ENCODE measurements at regions of chr1 and their contacts with region 1.

Region 1: DNA sequence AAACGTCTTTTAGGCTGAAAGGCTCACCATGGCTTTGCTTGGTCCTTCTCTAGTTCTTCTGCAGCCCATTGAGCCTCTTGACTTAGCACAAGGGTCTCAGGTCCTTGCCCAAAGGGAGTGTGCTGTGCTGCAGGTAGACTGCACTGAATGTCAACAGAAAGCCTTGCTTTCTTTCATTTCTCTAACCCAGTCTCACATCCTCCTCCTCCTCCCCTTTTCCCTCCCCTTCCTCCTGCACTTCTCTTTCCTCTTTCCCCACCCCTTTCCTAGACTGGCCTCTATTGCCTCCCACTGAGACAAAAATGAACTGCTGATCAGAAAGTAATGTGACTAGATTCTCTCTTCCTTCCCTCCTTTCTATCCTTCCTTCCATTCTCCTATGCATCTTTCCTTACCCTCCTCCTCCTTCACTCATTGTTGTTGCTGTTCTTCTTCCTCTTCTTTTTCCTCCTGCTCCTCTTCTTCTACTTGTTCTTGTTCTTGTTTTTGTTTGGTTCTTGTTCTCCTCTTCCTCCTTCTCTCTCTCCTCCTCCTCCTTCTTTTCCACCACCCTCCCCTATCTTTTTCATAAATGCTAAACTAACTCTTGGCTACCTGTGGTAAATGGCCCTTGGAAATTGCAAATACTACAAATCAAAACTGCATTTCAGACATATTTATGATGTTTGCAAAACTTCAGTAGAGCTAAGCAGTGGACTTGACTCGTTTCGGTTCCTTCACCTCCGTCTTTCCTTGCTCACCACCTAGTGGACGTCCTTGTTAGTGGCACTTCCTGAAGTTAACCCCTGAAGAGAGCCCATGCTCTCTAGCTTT is at the start of gene SELL:
- H3K4me3 Mint-ChIP-seq: peak within 1 kb of the TSS; percentile 61
- H3K27ac Mint-ChIP-seq: peak within 1 kb of the TSS; percentile 61
- H3K4me1 Mint-ChIP-seq: peaks cover 32% of the 10 kb centered on the region
- H3K27me3 Mint-ChIP-seq: peaks cover 1% of the 10 kb centered on the region

Region 2: DNA sequence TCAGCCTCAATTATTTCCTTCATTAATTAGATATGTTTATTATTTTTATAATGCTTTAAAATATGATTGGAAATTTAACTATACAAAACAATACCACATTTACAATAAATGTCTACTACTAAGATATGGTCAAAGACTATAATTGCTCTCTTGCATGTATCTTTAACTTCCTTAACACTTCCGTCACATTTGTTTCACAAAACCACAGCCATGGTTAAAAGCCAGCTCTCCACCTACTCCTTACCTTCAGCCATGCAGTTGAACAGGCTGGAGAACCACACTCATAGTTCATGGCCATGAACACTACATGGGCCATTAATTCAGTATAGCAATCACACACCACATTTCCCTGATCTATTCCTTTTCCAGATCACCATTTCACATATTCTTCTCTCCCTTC is 416.2 kb before region 1 on chr1:
- intact Hi-C with region 1: no loop called
- H3K4me3 Mint-ChIP-seq: no peak overlapping the region
- H3K27ac Mint-ChIP-seq: no peak overlapping the region
- H3K4me1 Mint-ChIP-seq: peaks cover 10% of the 10 kb centered on the region
- H3K27me3 Mint-ChIP-seq: no peaks in the 10 kb centered on the region

Region 3: DNA sequence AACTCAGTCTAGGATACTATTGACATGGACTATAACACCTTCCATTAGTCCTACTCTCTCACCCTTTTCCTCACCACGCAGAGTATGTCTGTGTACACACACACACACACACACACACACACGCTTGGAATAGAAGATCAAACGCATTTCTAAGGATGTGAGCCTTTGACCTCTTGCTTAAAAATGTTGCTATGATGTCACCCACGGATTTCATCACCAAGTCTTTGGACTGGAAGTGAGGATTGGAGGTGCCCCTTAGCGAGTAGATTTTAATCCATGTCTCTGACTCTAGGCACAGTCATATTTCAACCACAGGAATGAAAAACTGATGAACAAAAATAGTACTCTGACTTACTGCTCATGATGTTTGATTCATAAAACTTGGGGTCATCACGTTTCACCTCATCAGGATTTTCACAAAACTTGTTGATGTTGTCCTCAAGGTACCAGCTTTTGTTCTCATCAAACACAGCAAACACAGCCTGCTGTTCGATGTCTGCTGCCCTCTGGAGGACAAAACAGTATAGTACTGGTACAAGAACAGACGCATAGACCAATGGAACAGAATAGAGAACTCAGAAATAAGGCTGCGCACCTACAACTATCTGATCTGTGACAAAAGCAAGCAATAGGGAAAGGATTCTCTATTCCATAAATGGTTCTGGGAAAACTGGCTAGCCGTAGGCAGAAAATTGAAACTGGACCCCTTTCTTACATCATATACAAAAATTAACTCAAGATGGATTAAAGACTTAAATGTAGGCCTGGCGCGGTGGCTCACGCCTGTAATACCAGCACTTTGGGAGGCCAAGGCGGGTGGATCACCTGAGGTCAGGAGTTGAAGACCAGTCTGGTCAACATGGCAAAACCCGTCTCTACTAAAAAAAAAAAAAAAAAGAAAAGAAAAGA is 165.3 kb before region 1 on chr1:
- intact Hi-C with region 1: loop called (anchors 2 kb)
- H3K4me3 Mint-ChIP-seq: no peak overlapping the region
- H3K27ac Mint-ChIP-seq: no peak overlapping the region
- H3K4me1 Mint-ChIP-seq: no peaks in the 10 kb centered on the region
- H3K27me3 Mint-ChIP-seq: no peaks in the 10 kb centered on the region

Region 4: GRCh38 chr1:169601093-169601881 is 110.4 kb before region 1 on chr1:
- intact Hi-C with region 1: loop called (anchors 1 kb)
- H3K4me3 Mint-ChIP-seq: no peak overlapping the region
- H3K27ac Mint-ChIP-seq: no peak overlapping the region
- H3K4me1 Mint-ChIP-seq: peaks cover 30% of the 10 kb centered on the region
- H3K27me3 Mint-ChIP-seq: no peaks in the 10 kb centered on the region

Region 5: GRCh38 chr1:169786974-169787373 is 75.3 kb after region 1 on chr1:
- intact Hi-C with region 1: loop called (anchors 5 kb)
- H3K4me3 Mint-ChIP-seq: no peak overlapping the region
- H3K27ac Mint-ChIP-seq: no peak overlapping the region
- H3K4me1 Mint-ChIP-seq: no peaks in the 10 kb centered on the region
- H3K27me3 Mint-ChIP-seq: peaks cover 21% of the 10 kb centered on the region

Region 6: DNA sequence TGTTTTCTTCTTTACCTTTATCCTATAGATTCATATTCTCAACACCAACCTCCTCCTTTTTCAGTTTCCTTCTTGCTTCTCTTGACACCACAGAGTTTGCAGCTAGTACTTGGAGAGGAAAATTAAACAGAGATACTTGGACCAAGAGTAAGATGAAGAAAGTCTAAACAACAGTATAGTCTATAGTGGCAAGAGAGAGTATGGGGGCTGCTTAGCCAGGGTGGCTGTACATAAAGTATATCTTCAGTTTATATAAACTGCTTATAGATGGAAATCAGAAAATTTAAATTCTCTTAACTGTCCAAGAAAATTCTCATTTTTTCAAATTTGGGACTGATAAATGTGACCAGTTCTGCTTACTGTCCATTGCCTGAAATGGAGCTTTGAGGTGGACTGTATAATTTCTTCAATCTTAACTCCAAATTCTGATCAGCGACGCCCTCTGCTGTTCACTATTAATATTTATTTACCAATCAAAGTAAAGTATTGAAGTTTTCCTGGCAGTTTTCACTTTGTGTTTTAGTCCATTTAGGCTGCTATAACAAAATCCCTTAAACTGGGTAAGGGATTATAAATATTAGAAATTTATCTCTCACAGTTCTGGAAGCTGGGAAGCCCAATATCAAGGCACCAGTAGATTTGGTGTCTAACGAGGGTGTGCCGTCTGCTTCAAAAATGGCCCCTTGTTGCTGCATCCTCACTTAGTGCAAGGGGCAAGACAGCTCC is 97.9 kb after region 1 on chr1:
- intact Hi-C with region 1: loop called (anchors 5 kb)
- H3K4me3 Mint-ChIP-seq: no peak overlapping the region
- H3K27ac Mint-ChIP-seq: no peak overlapping the region
- H3K4me1 Mint-ChIP-seq: no peaks in the 10 kb centered on the region
- H3K27me3 Mint-ChIP-seq: no peaks in the 10 kb centered on the region